Mammary epithelial cell (primary cell): ENCODE measurements at regions of chrX and their contacts with region 1.

Region 1: DNA sequence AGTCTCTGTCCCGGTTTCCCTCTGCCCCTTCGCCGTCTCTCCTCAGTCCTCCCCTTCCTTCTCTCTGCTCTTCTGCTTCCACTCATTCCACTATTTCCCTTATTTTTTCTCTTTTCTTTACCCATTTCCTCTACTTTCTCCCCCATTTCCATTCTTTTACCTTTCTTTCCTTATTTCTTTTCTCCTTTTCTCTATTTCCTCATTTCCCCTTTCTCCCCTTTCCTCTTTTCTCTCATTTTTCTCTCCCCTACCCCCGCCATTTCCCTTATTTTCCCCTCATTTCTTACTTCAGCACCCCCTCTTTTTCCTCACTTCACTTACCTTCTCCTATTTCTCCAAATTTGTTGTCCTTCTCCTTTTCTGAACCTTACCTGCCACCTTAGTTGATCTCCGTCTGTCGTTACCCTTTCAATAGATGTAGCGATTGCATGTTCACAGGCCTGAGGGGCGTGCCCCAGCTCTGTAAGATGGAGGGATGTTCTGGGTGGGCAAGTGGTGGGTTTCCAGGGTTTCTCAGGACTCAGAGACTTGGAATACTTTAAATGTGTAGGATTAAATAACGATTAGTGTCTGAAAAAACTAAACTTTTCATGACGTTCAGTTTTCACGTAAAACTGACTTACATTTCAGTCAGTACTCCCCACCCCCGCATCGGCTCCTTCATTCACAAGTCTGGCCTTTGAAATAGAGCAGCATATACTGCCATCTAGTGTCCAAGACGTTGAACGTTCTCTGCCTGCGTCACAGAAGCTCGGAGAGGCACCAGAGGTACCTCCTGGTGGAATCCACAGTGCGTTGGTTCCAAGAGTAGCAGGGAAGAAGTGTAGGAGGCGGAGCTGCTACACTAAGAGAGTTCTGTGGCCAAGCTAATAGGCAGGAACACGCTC is 641 bp upstream of the NCBP2L start:
- DNase-seq: peak; percentile 84
- H3K4me3 ChIP-seq: peak overlapping the region; percentile 47 to 60 (median 54)
- H3K27ac ChIP-seq: no peak overlapping the region
- H3K4me1 ChIP-seq: peaks cover 9% of the 10 kb centered on the region
- H3K27me3 ChIP-seq: no peaks in the 10 kb centered on the region
- CTCF ChIP-seq: peak; percentile 81 to 87

Region 2: GRCh38 chrX:107654872-107655761 is 121.8 kb before region 1 on chrX:
- CTCF ChIA-PET with region 1: interaction called, 5 read pairs
- dilution Hi-C with region 1: no loop called
- in situ Hi-C with region 1: no loop called
- intact Hi-C with region 1: loop called (anchors 1 kb)
- DNase-seq: peak; percentile 91
- H3K4me3 ChIP-seq: no peak overlapping the region
- H3K27ac ChIP-seq: no peak overlapping the region
- H3K4me1 ChIP-seq: peaks cover 6% of the 10 kb centered on the region
- H3K27me3 ChIP-seq: no peaks in the 10 kb centered on the region
- CTCF ChIP-seq: peak; percentile 48 to 62

Region 3: GRCh38 chrX:107716816-107717700 is 59.8 kb before region 1 on chrX:
- CTCF ChIA-PET with region 1: interaction called, 6 read pairs
- dilution Hi-C with region 1: no loop called
- in situ Hi-C with region 1: no loop called
- intact Hi-C with region 1: loop called (anchors 1 kb)
- DNase-seq: peak; percentile 77
- H3K4me3 ChIP-seq: peak overlapping the region; percentile 47 to 68 (median 65)
- H3K27ac ChIP-seq: peak overlapping the region; percentile 85
- H3K4me1 ChIP-seq: peaks cover 13% of the 10 kb centered on the region
- H3K27me3 ChIP-seq: no peaks in the 10 kb centered on the region
- CTCF ChIP-seq: no peak

Region 4: GRCh38 chrX:107894038-107894437 is 117.1 kb after region 1 on chrX:
- CTCF ChIA-PET with region 1: no interaction called
- dilution Hi-C with region 1: no loop called
- in situ Hi-C with region 1: no loop called
- intact Hi-C with region 1: loop called (anchors 1 kb)
- DNase-seq: peak; percentile 57
- H3K4me3 ChIP-seq: no peak overlapping the region
- H3K27ac ChIP-seq: no peak overlapping the region
- H3K4me1 ChIP-seq: no peaks in the 10 kb centered on the region
- H3K27me3 ChIP-seq: no peaks in the 10 kb centered on the region
- CTCF ChIP-seq: peak; percentile 46 to 53

Region 5: DNA sequence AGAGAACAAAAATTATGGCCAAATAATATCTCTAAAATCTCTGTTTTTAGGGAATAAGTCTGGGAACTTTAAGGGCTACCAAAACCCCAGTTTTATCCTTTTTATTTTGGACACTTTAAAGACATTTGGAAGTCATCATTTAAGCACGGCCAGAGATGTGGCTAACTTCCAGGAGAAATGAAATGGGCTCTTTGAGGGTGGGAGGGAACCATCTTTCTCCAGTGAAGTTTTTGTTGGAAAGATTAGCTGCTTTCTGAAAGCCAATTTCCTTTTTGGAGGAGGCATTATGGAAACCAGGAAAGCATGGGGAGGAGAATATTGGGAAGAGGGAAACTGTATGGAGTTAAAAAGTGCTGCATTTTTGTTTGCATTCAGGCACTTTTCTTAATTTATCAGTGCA is 272.8 kb after region 1 on chrX:
- CTCF ChIA-PET with region 1: no interaction called
- dilution Hi-C with region 1: no loop called
- in situ Hi-C with region 1: no loop called
- intact Hi-C with region 1: no loop called
- DNase-seq: no peak
- H3K4me3 ChIP-seq: no peak overlapping the region
- H3K27ac ChIP-seq: no peak overlapping the region
- H3K4me1 ChIP-seq: no peaks in the 10 kb centered on the region
- H3K27me3 ChIP-seq: peaks cover 4% of the 10 kb centered on the region
- CTCF ChIP-seq: no peak